ENCODE measurements at regions of chr3 and their contacts with region 1.

Region 1: GRCh38 chr3:45105855-45106671 is 40.1 kb downstream of the CDCP1 start:
- DNase-seq: peak; percentile 78
- H3K4me3 Mint-ChIP-seq: peak overlapping the region; percentile 49
- H3K27ac Mint-ChIP-seq: peak overlapping the region; percentile 69
- H3K4me1 Mint-ChIP-seq: peaks cover 69% of the 10 kb centered on the region
- H3K27me3 Mint-ChIP-seq: peaks cover 29% of the 10 kb centered on the region

Region 2: GRCh38 chr3:45064512-45065372 is 41.3 kb before region 1 on chr3:
- intact Hi-C with region 1: loop called (anchors 2 kb)
- DNase-seq: peak; percentile 30
- H3K4me3 Mint-ChIP-seq: peak overlapping the region; percentile 63
- H3K27ac Mint-ChIP-seq: peak overlapping the region; percentile 82
- H3K4me1 Mint-ChIP-seq: peaks cover 30% of the 10 kb centered on the region
- H3K27me3 Mint-ChIP-seq: peaks cover 15% of the 10 kb centered on the region

Region 3: DNA sequence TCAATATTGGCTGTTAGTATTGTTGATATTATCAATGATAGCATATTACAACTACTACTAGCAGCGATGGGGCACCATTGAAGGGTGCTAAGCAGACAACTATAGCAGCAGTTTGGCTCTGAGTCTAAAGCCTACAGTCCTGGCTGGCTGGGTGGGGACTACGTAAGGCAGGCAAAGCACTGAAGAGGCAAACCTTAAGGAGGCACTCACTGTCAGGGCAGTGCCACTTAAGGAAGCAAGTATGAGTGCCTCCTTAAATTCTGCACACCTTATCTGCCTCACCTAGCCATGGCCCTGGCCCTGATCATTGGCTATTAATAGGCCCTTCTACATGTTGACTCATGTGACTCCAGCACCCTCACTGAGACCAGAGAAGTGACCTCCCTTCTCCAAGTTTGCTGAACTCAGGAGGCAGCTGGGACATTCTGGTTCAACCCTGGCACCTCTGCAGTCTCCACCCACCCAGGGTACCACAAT is 19.5 kb after region 1 on chr3:
- intact Hi-C with region 1: no loop called
- DNase-seq: no peak
- H3K4me3 Mint-ChIP-seq: no peak overlapping the region
- H3K27ac Mint-ChIP-seq: no peak overlapping the region
- H3K4me1 Mint-ChIP-seq: peaks cover 16% of the 10 kb centered on the region
- H3K27me3 Mint-ChIP-seq: peaks cover 41% of the 10 kb centered on the region

Region 4: DNA sequence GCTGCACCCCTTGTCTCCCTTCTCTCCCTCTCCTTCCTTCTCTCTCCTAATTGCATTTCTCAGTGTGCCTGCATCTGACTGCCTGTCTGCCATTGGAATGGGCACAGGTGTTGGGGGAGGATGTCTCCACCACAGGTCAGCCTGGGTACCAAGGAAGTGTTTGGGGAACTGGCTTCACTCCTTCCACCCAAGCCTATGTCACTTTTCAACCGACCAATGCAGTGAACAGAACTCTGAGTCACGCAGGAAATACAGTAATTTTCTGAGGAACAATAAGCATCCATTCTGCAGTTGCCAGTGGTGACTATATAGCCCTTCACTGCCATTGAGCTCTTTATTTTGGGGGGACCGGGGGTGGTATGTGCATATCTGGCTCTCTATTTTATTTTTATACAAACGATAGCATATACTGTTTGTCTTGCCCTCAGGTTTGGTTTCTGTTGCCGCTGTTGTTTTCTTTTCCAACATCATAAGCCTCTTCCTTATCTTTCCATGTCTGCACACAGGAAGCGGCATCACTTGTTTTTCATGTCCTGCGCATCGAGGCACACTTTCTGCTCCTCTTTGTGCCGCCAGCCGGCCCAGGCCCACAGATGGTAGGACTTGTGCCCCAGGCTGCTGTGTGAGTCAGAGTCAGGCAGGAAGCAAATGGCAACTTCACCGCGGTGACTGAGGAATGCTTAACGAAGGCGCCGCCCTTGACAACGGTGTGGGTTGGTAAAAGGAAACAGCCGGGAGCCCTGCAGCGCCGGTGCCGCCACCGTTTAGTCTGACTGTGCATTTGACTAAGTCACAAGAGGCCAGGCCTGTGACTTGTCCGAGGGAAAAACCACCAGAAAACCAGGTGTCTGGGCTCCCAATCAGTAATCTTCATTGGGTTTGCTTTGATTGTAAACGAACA is 61.2 kb after region 1 on chr3:
- intact Hi-C with region 1: loop called (anchors 1 kb)
- DNase-seq: peak; percentile 76
- H3K4me3 Mint-ChIP-seq: peak overlapping the region; percentile 72
- H3K27ac Mint-ChIP-seq: peak overlapping the region; percentile 93
- H3K4me1 Mint-ChIP-seq: peaks cover 44% of the 10 kb centered on the region
- H3K27me3 Mint-ChIP-seq: peaks cover 4% of the 10 kb centered on the region

Region 5: GRCh38 chr3:45224824-45225464 is 118.9 kb after region 1 on chr3:
- intact Hi-C with region 1: loop called (anchors 5 kb)
- DNase-seq: peak; percentile 4
- H3K4me3 Mint-ChIP-seq: peak overlapping the region; percentile 79
- H3K27ac Mint-ChIP-seq: peak overlapping the region; percentile 80
- H3K4me1 Mint-ChIP-seq: peaks cover 17% of the 10 kb centered on the region
- H3K27me3 Mint-ChIP-seq: peaks cover 75% of the 10 kb centered on the region

Region 6: DNA sequence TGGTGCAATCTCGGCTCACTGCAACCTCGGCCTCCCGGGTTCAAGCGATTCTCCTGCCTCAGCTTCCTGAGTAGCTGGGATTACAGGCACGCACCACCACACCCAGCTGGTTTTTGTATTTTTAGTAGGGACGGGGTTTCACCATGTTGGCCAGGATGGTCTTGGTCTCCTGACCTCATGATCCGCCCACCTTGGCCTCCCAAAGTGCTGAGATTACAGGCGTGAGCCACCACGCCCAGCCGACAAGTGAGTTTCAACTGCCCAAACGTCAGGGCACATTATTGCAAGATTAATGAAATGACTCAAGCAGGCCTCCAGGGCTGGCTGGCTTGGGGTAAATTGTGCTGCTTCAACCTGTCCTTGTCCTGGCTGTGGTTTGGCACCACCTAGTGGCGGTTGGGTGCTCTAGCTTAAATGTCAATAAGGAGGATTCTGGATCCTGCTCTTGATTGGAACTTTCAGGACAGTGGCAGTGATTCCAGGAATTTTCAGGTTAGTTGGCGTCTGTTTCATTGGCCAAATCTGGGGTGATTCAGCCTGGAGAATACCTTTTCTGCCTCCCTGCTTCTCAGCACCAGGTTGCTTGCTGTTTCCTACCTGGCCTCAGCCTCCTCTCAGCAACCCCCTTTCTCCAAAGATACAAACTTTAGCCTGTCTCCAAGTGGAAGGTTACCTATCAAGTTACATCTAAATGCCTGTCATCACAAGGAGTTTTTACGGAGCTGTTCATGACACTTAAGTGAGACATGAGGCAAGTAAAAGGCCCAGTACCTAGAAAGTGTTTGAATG is 550.7 kb after region 1 on chr3:
- intact Hi-C with region 1: loop called (anchors 5 kb)
- DNase-seq: peak; percentile 72
- H3K4me3 Mint-ChIP-seq: no peak overlapping the region
- H3K27ac Mint-ChIP-seq: no peak overlapping the region
- H3K4me1 Mint-ChIP-seq: peaks cover 12% of the 10 kb centered on the region
- H3K27me3 Mint-ChIP-seq: no peaks in the 10 kb centered on the region

Measured in activated T-helper 1 cell treated with anti-CD3 and anti-CD28 coated beads, Interleukin-12 subunit alpha, Interleukin-12 subunit beta, Interleukin-2, Interleukin-4 antibody, amounts not matched to agents 30 ng/mL and 10 ng/mL and 1 ng/mL, durations not matched to agents 14 hours and 24 hours and 36 hours (primary cell).